CD8-positive, alpha-beta memory T cell (primary cell): ENCODE measurements at regions of chr7 and their contacts with region 1.

Region 1: GRCh38 chr7:2709553-2710285 is 21.7 kb downstream of the AMZ1 start:
- DNase-seq: peak; percentile 67 to 84 (median 77)
- H3K4me3 ChIP-seq: peak overlapping the region; percentile 66
- H3K4me3 Mint-ChIP-seq: peak overlapping the region; percentile 76 to 85 (median 78)
- H3K27ac ChIP-seq: peak overlapping the region; percentile 43
- H3K27ac Mint-ChIP-seq: peak overlapping the region in 6 of 8 donors; percentile 68 to 90 (median 88)
- H3K4me1 ChIP-seq: peaks cover 33% of the 10 kb centered on the region
- H3K4me1 Mint-ChIP-seq: peaks cover 29 to 47% (median 36%) of the 10 kb centered on the region in 3 donors
- H3K27me3 ChIP-seq: no peaks in the 10 kb centered on the region
- H3K27me3 Mint-ChIP-seq: peaks cover 0 to 4% of the 10 kb centered on the region in 2 donors

Region 2: GRCh38 chr7:2321020-2321419 is 388.7 kb before region 1 on chr7:
- CTCF ChIA-PET with region 1: no interaction called
- POLR2A ChIA-PET with region 1: no interaction called
- DNase-seq: no peak
- H3K4me3 ChIP-seq: no peak overlapping the region
- H3K4me3 Mint-ChIP-seq: no peak overlapping the region
- H3K27ac ChIP-seq: no peak overlapping the region
- H3K27ac Mint-ChIP-seq: no peak overlapping the region
- H3K4me1 ChIP-seq: no peaks in the 10 kb centered on the region
- H3K4me1 Mint-ChIP-seq: no peaks in the 10 kb centered on the region
- H3K27me3 ChIP-seq: no peaks in the 10 kb centered on the region
- H3K27me3 Mint-ChIP-seq: peaks cover 0 to 8% of the 10 kb centered on the region in 2 donors

Region 3: DNA sequence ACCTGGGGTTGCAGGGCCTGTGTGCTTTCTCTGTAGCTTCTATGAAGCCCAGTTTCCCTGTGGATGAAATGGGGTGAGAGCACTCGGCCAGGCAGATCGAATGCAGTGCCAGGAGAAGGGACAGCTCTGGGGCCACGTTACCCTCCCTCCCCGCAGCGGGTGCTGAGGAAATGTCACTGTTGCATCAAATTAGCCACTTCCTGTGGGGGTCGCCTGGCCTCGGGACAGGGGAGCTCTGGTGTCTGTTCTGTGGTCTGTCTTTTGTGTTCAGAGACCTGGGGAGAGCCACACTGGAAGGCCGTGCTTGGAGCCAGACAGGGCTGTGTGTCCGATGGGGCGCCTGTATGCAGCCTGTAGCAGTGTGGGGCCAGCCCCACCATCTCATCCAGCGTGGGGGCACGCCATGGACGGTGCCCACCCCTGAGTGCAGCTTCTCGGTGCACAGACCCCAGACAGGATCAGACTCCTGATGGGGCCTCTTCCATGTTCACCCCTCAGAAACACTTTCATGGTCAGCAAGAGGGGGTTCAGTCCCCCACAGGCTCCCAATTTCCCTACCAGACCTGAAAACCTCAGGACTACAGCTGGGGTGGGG is 64.3 kb before region 1 on chr7:
- CTCF ChIA-PET with region 1: interaction called, 19 read pairs
- POLR2A ChIA-PET with region 1: no interaction called
- DNase-seq: peak; percentile 18 to 68 (median 49)
- H3K4me3 ChIP-seq: peak overlapping the region; percentile 53
- H3K4me3 Mint-ChIP-seq: peak overlapping the region in 6 of 7 donors; percentile 79 to 89 (median 84)
- H3K27ac ChIP-seq: no peak overlapping the region
- H3K27ac Mint-ChIP-seq: peak overlapping the region; percentile 74 to 91 (median 82)
- H3K4me1 ChIP-seq: peaks cover 15% of the 10 kb centered on the region
- H3K4me1 Mint-ChIP-seq: peaks cover 14 to 24% (median 14%) of the 10 kb centered on the region in 3 donors
- H3K27me3 ChIP-seq: no peaks in the 10 kb centered on the region
- H3K27me3 Mint-ChIP-seq: peaks cover 0 to 2% of the 10 kb centered on the region in 2 donors

Region 4: DNA sequence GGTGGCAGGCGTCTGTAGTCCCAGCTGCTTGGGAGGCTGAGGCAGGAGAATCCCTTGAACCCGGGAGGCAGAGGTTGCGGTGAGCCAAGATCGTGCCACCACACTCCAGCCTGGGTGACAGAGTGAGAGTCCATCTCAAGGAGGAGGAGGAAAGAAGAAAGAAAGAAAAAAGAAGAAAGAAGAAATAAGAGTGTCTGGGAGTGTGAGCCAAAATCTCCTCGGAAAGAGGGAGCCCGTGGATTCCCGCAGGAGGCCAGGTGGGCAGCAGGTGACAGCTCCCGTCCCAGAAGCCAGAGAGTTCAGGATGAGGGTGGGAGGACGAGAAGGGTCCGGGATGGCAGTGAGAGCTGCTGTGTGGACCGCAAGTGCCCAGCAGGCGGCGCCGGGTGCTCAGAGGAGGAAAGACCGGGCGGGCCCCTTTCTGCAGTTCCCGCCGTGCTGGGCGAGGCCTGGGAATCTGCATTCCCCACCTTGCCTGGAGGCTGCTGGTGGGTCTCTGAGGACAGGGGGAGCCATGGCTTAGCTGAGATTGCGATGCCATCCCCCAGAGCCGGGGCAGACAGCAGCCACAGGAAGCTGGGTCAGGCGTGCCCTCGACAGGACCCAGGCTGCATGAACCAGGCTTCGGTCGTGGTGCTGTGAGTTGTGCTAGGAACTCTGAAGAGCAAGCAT is 38.9 kb before region 1 on chr7:
- CTCF ChIA-PET with region 1: interaction called, 126 read pairs
- POLR2A ChIA-PET with region 1: interaction called, 7 read pairs
- DNase-seq: peak; percentile 50 to 79 (median 54)
- H3K4me3 ChIP-seq: no peak overlapping the region
- H3K4me3 Mint-ChIP-seq: peak overlapping the region in 1 of 7 donors; percentile 39
- H3K27ac ChIP-seq: no peak overlapping the region
- H3K27ac Mint-ChIP-seq: peak overlapping the region in 2 of 8 donors; percentile 17 to 33
- H3K4me1 ChIP-seq: no peaks in the 10 kb centered on the region
- H3K4me1 Mint-ChIP-seq: peaks cover 5 to 8% (median 7%) of the 10 kb centered on the region in 3 donors
- H3K27me3 ChIP-seq: no peaks in the 10 kb centered on the region
- H3K27me3 Mint-ChIP-seq: peaks cover 15 to 28% of the 10 kb centered on the region in 2 donors

Region 5: GRCh38 chr7:2688409-2689331 is 21.0 kb before region 1 on chr7:
- CTCF ChIA-PET with region 1: interaction called, 10 read pairs
- POLR2A ChIA-PET with region 1: interaction called, 3 read pairs
- DNase-seq: no peak
- H3K4me3 ChIP-seq: no peak overlapping the region
- H3K4me3 Mint-ChIP-seq: peak overlapping the region in 6 of 7 donors; percentile 16 to 85 (median 54)
- H3K27ac ChIP-seq: no peak overlapping the region
- H3K27ac Mint-ChIP-seq: peak overlapping the region in 2 of 8 donors; percentile 17 to 78
- H3K4me1 ChIP-seq: peaks cover 10% of the 10 kb centered on the region
- H3K4me1 Mint-ChIP-seq: peaks cover 11 to 22% (median 13%) of the 10 kb centered on the region in 3 donors
- H3K27me3 ChIP-seq: peaks cover 26% of the 10 kb centered on the region
- H3K27me3 Mint-ChIP-seq: peaks cover 37 to 48% of the 10 kb centered on the region in 2 donors

Region 6: GRCh38 chr7:2720582-2721491 is 11.1 kb after region 1 on chr7:
- CTCF ChIA-PET with region 1: interaction called, 65 read pairs
- POLR2A ChIA-PET with region 1: interaction called, 6 read pairs
- DNase-seq: peak in 4 of 5 donors; percentile 45 to 80 (median 62)
- H3K4me3 ChIP-seq: no peak overlapping the region
- H3K4me3 Mint-ChIP-seq: peak overlapping the region in 3 of 7 donors; percentile 33 to 40 (median 33)
- H3K27ac ChIP-seq: no peak overlapping the region
- H3K27ac Mint-ChIP-seq: peak overlapping the region in 7 of 8 donors; percentile 38 to 91 (median 76)
- H3K4me1 ChIP-seq: peaks cover 34% of the 10 kb centered on the region
- H3K4me1 Mint-ChIP-seq: peaks cover 29 to 46% (median 43%) of the 10 kb centered on the region in 3 donors
- H3K27me3 ChIP-seq: no peaks in the 10 kb centered on the region
- H3K27me3 Mint-ChIP-seq: no peaks in the 10 kb centered on the region